ENCODE measurements at regions of chr22 and their contacts with region 1.

Region 1: GRCh38 chr22:21754523-21754922 is 18.9 kb upstream of the YPEL1 start:
- DNase-seq: no peak
- H3K4me3 Mint-ChIP-seq: no peak overlapping the region
- H3K27ac Mint-ChIP-seq: no peak overlapping the region
- H3K4me1 Mint-ChIP-seq: no peaks in the 10 kb centered on the region
- H3K27me3 Mint-ChIP-seq: no peaks in the 10 kb centered on the region

Region 2: DNA sequence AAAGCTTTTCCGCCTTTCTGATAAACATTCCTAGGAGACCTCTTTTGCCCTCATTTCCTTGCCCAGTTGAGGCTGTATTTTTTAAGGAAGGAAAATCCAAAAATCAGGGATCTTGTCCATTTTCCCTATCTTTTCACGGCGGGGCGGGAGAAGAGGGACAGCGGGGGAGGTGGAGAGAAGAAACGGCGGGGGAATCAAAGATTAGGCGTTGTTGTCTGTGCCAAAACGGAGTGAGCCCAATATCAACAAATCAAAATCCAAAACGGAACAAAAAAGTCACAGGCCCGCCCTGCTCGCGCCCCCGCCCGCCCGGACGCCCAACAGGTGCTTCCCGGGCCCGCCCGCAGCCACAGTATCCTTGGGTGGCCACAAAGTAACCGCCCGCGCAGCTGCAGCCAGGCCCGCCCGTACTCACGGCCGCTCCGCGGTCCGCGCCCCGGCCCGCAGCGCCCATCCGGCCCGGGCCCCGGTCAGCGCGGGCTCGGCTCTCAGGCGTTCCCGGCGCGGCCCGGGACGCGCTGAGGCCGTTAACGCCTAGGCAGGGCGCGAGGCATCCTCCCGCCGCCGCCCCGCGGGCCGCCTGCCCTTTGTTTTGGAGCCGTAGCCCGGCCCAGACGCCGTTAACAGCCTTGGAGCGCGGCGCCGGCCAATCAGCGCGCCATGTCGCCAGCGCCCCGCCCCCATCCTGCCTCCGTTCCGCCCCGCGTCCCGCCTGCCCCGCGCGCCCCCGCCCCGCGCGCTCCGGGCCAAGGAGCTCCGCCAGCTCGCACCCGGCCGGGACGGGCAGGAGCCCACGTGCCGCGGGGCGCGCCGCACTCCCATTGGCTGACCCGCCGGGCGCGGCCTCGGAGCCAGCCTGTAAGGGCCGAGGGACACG is 19.1 kb before region 1 on chr22 and contains the start of gene YPEL1:
- CTCF ChIA-PET with region 1: no interaction called
- POLR2A ChIA-PET with region 1: interaction called, 10 read pairs
- DNase-seq: peak; percentile 94
- H3K4me3 Mint-ChIP-seq: peak within 1 kb of the TSS; percentile 91
- H3K27ac Mint-ChIP-seq: peak within 1 kb of the TSS; percentile 96
- H3K4me1 Mint-ChIP-seq: peaks cover 21% of the 10 kb centered on the region
- H3K27me3 Mint-ChIP-seq: peaks cover 21% of the 10 kb centered on the region
- total RNA-seq, gene YPEL1: 8.9 to 11.0 TPM